Calu3 (cell line): ENCODE measurements at regions of chr10 and their contacts with region 1.

Region 1: DNA sequence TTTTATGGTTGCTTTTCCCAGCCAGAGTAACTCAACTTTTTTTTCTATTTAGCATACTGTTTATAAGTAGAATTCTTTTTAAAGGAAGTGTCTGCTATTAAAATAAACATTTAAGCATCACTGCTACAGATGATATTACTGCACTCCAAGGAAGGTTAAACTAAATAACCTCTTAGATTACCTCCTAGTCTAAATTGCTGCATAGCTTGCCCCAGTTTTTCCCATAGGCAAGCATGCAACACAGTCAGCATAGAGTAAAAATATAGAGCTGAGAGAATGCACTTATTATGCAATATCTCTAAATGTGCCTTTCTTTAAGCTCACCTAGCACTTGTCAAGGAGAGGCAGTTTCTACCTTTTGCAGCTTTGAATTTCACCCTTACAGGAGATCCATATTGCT is 1392.4 kb upstream of the CELF2 start:
- DNase-seq: no peak
- H3K4me3 Mint-ChIP-seq: no peak overlapping the region
- H3K27ac Mint-ChIP-seq: no peak overlapping the region
- H3K4me1 Mint-ChIP-seq: no peaks in the 10 kb centered on the region
- H3K27me3 Mint-ChIP-seq: no peaks in the 10 kb centered on the region
- CTCF ChIP-seq: no peak

Region 2: DNA sequence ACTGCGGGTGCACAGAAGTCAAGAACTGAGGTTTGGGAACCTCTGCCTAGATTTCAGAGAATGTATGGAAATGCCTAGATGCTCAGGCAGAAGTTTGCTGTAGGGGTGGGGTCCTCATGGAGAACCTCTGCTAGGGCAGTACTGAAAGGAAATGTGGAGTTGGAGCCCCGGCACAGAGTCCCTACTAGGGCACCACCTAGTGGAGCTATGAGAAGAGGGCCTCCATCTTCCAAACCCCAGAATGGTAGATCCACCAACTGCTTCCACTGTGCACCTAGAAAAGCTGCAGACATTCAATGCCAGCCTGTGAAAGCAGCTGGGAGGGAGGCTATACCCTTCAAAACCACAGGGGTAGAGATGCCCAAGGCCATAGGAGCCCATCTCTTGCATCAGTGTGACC is 56.4 kb after region 1 on chr10:
- CTCF ChIA-PET with region 1: no interaction called
- intact Hi-C with region 1: loop called (anchors 1 kb)
- DNase-seq: no peak
- H3K4me3 Mint-ChIP-seq: no peak overlapping the region
- H3K27ac Mint-ChIP-seq: no peak overlapping the region
- H3K4me1 Mint-ChIP-seq: no peaks in the 10 kb centered on the region
- H3K27me3 Mint-ChIP-seq: no peaks in the 10 kb centered on the region
- CTCF ChIP-seq: no peak